Stomach (tissue), 19 donors: ENCODE measurements at regions of chr6 and their contacts with region 1.

Region 1: GRCh38 chr6:127302728-127303660 is 36.3 kb downstream of the RNF146 start:
- DNase-seq: peak; percentile 44 to 76
- H3K4me3 ChIP-seq: no peak overlapping the region
- H3K27ac ChIP-seq: peak overlapping the region in 1 of 5 donors; percentile 14
- H3K4me1 ChIP-seq: peaks cover 4 to 46% (median 26%) of the 10 kb centered on the region in 4 donors
- H3K27me3 ChIP-seq: no peaks in the 10 kb centered on the region
- CTCF ChIP-seq: peak in 4 of 7 experiments; percentile 59 to 64 (median 60)
- EP300 ChIP-seq: no peak
- POLR2A ChIP-seq: no peak

Region 2: DNA sequence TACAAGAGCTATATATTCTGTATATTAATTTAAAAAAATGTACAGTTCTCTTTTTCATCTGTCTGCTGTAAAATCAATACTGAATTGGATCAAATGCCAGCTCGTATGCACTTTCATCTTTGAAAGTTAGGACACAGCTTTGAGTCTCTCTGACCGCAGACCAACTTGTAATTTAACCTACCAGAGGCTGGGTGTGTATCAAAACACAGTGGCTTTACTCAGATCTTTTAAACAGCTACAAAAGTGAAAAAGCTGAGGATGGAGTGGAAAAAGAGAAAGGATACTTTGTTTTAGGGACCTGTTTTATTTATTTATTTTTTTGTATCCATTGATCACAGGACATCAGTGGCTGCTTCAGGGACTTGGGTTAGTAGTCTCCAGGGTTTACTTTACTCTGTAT is 112.1 kb after region 1 on chr6:
- intact Hi-C with region 1: no loop called
- DNase-seq: no peak
- H3K4me3 ChIP-seq: no peak overlapping the region
- H3K27ac ChIP-seq: no peak overlapping the region
- H3K4me1 ChIP-seq: peaks cover 0 to 4% (median under 1%) of the 10 kb centered on the region in 4 donors
- H3K27me3 ChIP-seq: no peaks in the 10 kb centered on the region
- CTCF ChIP-seq: no peak
- EP300 ChIP-seq: no peak
- POLR2A ChIP-seq: no peak

Region 3: DNA sequence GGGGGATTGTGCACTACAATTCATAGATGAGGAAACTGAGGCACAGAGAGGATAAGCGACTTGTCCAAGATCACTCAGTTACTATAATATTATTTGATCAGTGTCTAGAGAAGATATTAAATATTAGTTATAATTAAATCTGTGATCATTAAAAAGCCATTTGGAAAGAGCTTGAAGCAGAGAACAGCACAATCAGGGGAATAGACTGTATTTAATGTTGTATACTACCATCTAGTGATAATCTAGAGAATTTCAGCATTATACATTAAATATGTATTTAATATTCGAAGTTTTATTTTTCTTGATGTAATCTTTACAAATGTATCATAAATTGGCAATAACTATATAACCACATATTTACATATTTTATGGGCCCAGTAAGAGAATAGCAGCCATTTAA is 236.3 kb after region 1 on chr6:
- intact Hi-C with region 1: loop called (anchors 10 kb)
- DNase-seq: peak in 1 of 2 donors; percentile 15
- H3K4me3 ChIP-seq: no peak overlapping the region
- H3K27ac ChIP-seq: no peak overlapping the region
- H3K4me1 ChIP-seq: no peaks in the 10 kb centered on the region
- H3K27me3 ChIP-seq: no peaks in the 10 kb centered on the region
- CTCF ChIP-seq: peak in 3 of 7 experiments; percentile 32 to 48 (median 41)
- EP300 ChIP-seq: no peak
- POLR2A ChIP-seq: no peak

Region 4: GRCh38 chr6:127561660-127562059 is 258.7 kb after region 1 on chr6:
- intact Hi-C with region 1: no loop called
- DNase-seq: no peak
- H3K4me3 ChIP-seq: no peak overlapping the region
- H3K27ac ChIP-seq: no peak overlapping the region
- H3K4me1 ChIP-seq: no peaks in the 10 kb centered on the region
- H3K27me3 ChIP-seq: no peaks in the 10 kb centered on the region
- CTCF ChIP-seq: no peak
- EP300 ChIP-seq: no peak
- POLR2A ChIP-seq: no peak